ENCODE measurements at regions of chr3 and their contacts with region 1.

Region 1: DNA sequence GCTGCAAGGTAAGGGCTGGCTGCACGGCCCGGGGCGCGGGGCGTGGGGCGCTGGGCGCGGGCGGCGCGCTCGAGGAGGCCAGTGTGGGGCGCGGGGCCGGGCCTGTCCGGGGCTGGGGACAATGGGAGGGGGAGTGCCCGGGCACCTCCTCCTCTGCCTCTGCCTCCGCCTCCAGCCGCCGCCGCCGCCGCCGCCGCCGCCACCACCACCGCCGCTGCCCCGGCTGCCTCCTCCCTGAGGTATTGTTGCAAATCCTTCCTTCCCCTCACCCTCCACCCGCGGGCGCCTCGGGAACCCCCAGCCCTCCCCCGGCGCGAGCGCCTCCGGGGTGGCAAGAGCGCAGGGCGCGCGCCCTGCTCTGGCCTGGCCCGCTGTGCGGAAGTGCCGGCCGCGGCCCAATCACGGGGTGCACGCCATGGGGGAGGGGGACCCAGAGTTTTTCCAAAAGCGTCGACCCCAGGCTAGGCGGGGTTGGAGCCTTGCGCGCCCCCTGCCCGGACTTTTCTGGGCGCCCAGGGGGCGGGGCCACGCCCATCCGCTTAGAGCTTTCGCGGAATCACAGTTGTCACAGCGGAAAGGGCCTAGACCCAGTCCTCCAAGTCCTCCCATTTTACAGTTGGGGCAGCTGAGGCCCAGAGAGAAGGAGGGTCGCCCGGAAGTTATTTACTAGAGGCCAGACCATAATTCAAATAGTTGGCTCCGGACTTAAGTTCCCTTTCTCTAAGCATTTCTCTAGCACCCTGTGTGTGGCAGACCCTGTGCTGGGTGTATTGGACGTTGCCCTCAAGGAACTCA is at the start of gene LPP:
- DNase-seq: peak; percentile 83 to 92 (median 86)
- ATAC-seq: peak; percentile 67 to 93 (median 82)
- H3K4me3 ChIP-seq: peak within 1 kb of the TSS; percentile 68 to 94 (median 86)
- H3K27ac ChIP-seq: peak within 1 kb of the TSS; percentile 90 to 99 (median 97)
- H3K4me1 ChIP-seq: peaks cover 0 to 62% (median 41%) of the 10 kb centered on the region in 12 donors
- H3K27me3 ChIP-seq: no peaks in the 10 kb centered on the region
- CTCF ChIP-seq: peak in 2 of 12 donors; percentile 7 to 25
- POLR2A ChIP-seq: no peak
- total RNA-seq, gene LPP: 76.6 to 178 (median 111) TPM

Region 2: GRCh38 chr3:188061133-188061532 is 93.1 kb before region 1 on chr3:
- intact Hi-C with region 1: loop called in 2 of 10 experiments (anchors 5 kb)
- DNase-seq: no peak
- ATAC-seq: peak in 2 of 4 donors; percentile 18 to 29
- H3K4me3 ChIP-seq: no peak overlapping the region
- H3K27ac ChIP-seq: no peak overlapping the region
- H3K4me1 ChIP-seq: peaks cover 0 to 16% (median 5%) of the 10 kb centered on the region in 12 donors
- H3K27me3 ChIP-seq: no peaks in the 10 kb centered on the region
- CTCF ChIP-seq: no peak
- POLR2A ChIP-seq: no peak

Region 3: DNA sequence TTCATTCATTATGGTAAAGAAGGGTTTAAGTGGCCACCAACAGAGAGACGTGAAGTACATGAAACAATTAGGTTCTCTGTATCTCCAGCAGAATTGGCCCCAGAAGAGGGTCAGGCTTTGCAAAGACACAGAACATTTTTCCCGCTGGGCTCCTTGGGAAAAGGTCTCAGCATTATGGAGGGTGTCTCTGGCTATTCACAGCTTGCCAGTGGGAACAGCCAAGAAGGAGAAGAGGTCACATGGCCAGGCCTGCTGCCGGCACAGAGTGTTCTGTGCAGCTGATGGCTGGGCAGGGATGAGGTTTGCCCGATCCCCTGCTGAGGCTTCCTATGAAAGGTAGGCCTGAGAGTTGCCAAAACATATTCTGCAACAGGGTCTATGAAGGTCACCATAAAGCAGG is 78.0 kb before region 1 on chr3:
- intact Hi-C with region 1: no loop called
- DNase-seq: peak in 2 of 5 donors; percentile 29 to 67
- ATAC-seq: peak; percentile 53 to 81 (median 77)
- H3K4me3 ChIP-seq: no peak overlapping the region
- H3K27ac ChIP-seq: peak overlapping the region in 10 of 12 donors; percentile 21 to 75 (median 55)
- H3K4me1 ChIP-seq: peaks cover 0 to 14% (median 5%) of the 10 kb centered on the region in 12 donors
- H3K27me3 ChIP-seq: no peaks in the 10 kb centered on the region
- CTCF ChIP-seq: no peak
- POLR2A ChIP-seq: no peak

Region 4: GRCh38 chr3:188270423-188270972 is 116.3 kb after region 1 on chr3:
- intact Hi-C with region 1: loop called in 4 of 10 experiments (anchors 10 kb)
- DNase-seq: no peak
- ATAC-seq: peak in 3 of 4 donors; percentile 33 to 60 (median 57)
- H3K4me3 ChIP-seq: no peak overlapping the region
- H3K27ac ChIP-seq: peak overlapping the region; percentile 29 to 96 (median 76)
- H3K4me1 ChIP-seq: peaks cover 0 to 91% (median 66%) of the 10 kb centered on the region in 12 donors
- H3K27me3 ChIP-seq: no peaks in the 10 kb centered on the region
- CTCF ChIP-seq: peak in 1 of 12 donors; percentile 6
- POLR2A ChIP-seq: no peak

Region 5: GRCh38 chr3:188339410-188340295 is 185.4 kb after region 1 on chr3:
- intact Hi-C with region 1: loop called in 2 of 10 experiments (anchors 5 kb)
- DNase-seq: no peak
- ATAC-seq: no peak
- H3K4me3 ChIP-seq: no peak overlapping the region
- H3K27ac ChIP-seq: peak overlapping the region in 9 of 12 donors; percentile 2 to 55 (median 18)
- H3K4me1 ChIP-seq: peaks cover 0 to 45% (median 20%) of the 10 kb centered on the region in 12 donors
- H3K27me3 ChIP-seq: no peaks in the 10 kb centered on the region
- CTCF ChIP-seq: no peak
- POLR2A ChIP-seq: no peak

Measured in heart left ventricle (tissue), 16 donors.